Activated CD4-positive, alpha-beta memory T cell treated with anti-CD3 and anti-CD28 coated beads, Interleukin-2, amount 10 ng/mL, durations not matched to agents 7 days and 5 days (primary cell): ENCODE measurements at regions of chr2 and their contacts with region 1.

Region 1: DNA sequence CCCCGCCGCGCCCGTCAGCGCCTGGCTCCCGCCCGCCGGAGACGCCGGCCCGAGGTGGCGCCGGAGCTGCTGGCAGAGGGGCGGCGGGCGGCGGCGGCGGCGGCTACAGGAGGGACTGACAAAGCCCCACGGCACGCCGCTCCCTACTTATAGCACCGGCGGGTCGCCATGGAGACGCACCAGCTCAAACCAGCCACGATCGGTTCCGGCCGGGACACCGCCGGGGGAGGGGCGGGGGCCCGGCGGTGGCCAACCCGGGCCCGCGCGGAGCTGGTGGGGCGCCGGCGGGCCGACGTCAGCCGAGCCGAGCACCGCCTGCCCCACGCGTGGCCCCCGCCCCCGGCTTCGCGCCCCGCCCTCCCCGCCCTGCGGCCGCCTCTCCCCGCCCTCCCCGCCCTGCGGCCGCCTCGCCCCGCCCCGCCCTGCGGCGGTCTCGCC is at the start of gene ODC1:
- DNase-seq: peak; percentile 96
- H3K4me3 Mint-ChIP-seq: peak within 1 kb of the TSS; percentile 85
- H3K27ac Mint-ChIP-seq: peak within 1 kb of the TSS; percentile 82
- H3K4me1 Mint-ChIP-seq: peaks cover 54% of the 10 kb centered on the region
- H3K27me3 Mint-ChIP-seq: no peaks in the 10 kb centered on the region
- total RNA-seq, gene ODC1: 48.1 to 54.9 TPM

Region 2: GRCh38 chr2:9638532-9638931 is 809.7 kb before region 1 on chr2:
- CTCF ChIA-PET with region 1: no interaction called
- POLR2A ChIA-PET with region 1: no interaction called
- DNase-seq: no peak
- H3K4me3 Mint-ChIP-seq: no peak overlapping the region
- H3K27ac Mint-ChIP-seq: no peak overlapping the region
- H3K4me1 Mint-ChIP-seq: peaks cover 40% of the 10 kb centered on the region
- H3K27me3 Mint-ChIP-seq: peaks cover 3% of the 10 kb centered on the region

Region 3: DNA sequence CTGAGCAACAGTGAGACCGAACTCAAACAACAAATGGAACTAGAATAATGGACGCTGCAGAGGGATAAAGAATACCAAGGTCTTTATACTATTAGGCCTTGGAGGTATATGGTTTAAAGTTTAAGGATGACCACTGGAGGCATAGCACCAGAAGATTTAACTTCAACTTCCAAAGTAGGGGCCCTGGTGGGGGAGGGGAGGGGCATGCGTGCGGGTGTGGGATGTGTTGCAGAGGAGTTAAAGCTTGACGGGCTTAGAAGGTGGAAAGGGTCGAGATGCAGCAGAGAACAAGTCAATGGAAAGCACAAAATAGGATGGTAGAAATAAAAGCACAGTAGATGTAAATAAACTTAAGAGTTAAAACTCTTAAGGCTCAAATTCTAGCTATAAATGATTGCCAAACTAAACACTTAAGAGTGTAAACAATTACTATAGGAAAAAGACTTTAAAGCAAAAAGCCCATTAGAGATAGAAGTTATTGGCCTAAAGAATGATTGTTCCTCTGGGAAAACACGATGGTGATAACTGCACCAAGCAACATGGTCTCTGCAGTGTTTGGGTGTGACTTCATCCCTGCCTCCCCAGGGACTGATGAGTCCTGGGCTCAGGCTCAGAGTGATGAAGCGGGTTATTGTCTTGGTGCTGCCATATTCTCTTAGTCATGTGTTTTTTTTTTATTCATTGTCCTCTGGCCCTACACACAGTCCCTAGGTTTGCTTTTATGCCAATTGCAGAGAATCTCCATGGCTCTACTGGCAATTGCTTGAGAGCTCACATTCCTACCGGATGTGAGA is 312.7 kb before region 1 on chr2:
- CTCF ChIA-PET with region 1: interaction called, 6 read pairs
- POLR2A ChIA-PET with region 1: interaction called, 14 read pairs
- DNase-seq: no peak
- H3K4me3 Mint-ChIP-seq: no peak overlapping the region
- H3K27ac Mint-ChIP-seq: peak overlapping the region; percentile 52
- H3K4me1 Mint-ChIP-seq: peaks cover 30% of the 10 kb centered on the region
- H3K27me3 Mint-ChIP-seq: no peaks in the 10 kb centered on the region

Region 4: GRCh38 chr2:10382354-10383061 is 65.7 kb before region 1 on chr2:
- CTCF ChIA-PET with region 1: no interaction called
- POLR2A ChIA-PET with region 1: interaction called, 11 read pairs
- DNase-seq: peak; percentile 54
- H3K4me3 Mint-ChIP-seq: peak overlapping the region; percentile 47
- H3K27ac Mint-ChIP-seq: peak overlapping the region; percentile 40
- H3K4me1 Mint-ChIP-seq: peaks cover 74% of the 10 kb centered on the region
- H3K27me3 Mint-ChIP-seq: no peaks in the 10 kb centered on the region

Region 5: GRCh38 chr2:10654069-10654468 is 205.8 kb after region 1 on chr2:
- CTCF ChIA-PET with region 1: interaction called, 28 read pairs
- POLR2A ChIA-PET with region 1: interaction called, 33 read pairs
- DNase-seq: peak; percentile 78
- H3K4me3 Mint-ChIP-seq: peak overlapping the region; percentile 0
- H3K27ac Mint-ChIP-seq: peak overlapping the region; percentile 62
- H3K4me1 Mint-ChIP-seq: peaks cover 66% of the 10 kb centered on the region
- H3K27me3 Mint-ChIP-seq: no peaks in the 10 kb centered on the region

Region 6: DNA sequence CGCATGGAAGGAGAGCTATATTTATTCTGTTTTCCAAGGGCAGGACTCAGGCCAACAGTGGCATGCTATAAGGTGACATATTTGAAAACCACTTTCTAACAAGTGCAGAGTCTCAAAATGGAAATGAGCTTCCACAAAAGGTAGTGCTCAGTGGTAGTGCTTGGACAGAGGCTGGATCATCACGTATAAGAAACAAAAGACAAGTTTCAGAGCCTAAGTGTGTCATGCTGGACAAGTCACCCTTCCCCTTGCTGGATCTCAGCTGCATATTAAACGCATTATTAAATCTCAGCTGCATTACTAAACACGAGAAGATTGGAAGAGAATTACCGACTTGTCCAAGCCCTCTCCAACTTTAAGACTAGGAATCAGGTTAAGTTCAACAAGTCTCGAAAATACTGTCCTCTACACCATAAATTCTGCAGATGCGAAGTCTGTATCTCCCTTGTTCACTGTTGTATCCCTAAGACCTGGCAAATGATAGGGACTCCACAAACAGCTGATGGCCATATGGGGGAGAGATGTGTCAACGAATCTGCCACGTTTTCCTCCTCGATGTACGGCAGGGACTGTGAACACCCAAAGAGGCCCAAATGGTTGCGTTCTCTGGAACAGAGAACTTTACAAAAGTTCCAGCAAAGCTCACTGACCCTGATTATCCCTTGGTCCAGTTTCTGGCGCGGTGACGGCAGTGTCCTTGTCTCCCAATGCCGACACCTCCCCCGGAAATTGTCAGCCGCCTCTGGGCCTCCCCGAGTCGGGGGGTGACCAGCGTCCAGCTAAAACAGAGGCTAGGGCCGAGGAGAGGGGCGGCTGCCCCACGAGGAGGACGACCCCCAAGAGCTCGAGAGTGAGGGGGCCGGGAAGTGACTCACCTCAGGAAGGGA is 240.9 kb after region 1 on chr2:
- CTCF ChIA-PET with region 1: interaction called, 3 read pairs
- POLR2A ChIA-PET with region 1: interaction called, 19 read pairs
- DNase-seq: peak; percentile 36
- H3K4me3 Mint-ChIP-seq: no peak overlapping the region
- H3K27ac Mint-ChIP-seq: no peak overlapping the region
- H3K4me1 Mint-ChIP-seq: peaks cover 9% of the 10 kb centered on the region
- H3K27me3 Mint-ChIP-seq: no peaks in the 10 kb centered on the region